Activated naive CD4-positive, alpha-beta T cell treated with anti-CD3 and anti-CD28 coated beads for 36 hours (primary cell): ENCODE measurements at regions of chr12 and their contacts with region 1.

Region 1: DNA sequence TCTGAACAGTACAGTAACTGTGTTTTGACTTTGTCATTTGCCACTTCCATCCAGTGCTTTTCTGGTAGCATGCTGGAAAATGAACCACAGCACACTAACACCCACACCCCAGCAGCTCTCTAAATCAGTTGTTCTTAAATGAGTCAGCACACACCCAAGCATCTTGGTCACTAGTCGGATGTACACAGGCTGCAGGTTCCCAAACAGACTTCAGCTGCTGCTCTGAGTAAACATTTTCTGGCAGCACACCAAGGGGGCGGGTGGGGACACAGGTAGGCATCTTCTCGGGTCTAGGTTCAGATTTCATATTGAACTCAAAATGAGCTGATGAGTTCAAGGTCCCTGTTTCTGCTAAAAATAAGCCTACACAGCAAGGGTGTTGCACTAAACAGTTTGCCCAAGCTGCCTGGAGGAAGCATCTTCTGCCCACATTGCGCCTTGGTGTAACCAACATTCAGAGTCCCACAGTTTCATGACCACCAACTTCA is 39.8 kb downstream of the IFNG start:
- DNase-seq: peak; percentile 83
- H3K4me3 Mint-ChIP-seq: no peak overlapping the region
- H3K27ac Mint-ChIP-seq: peak overlapping the region; percentile 43
- H3K4me1 Mint-ChIP-seq: peaks cover 33% of the 10 kb centered on the region
- H3K27me3 Mint-ChIP-seq: no peaks in the 10 kb centered on the region

Region 2: GRCh38 chr12:67991158-67991557 is 128.6 kb before region 1 on chr12:
- CTCF ChIA-PET with region 1: no interaction called
- intact Hi-C with region 1: loop called (anchors 1 kb)
- DNase-seq: peak; percentile 74
- H3K4me3 Mint-ChIP-seq: peak overlapping the region; percentile 55
- H3K27ac Mint-ChIP-seq: peak overlapping the region; percentile 80
- H3K4me1 Mint-ChIP-seq: peaks cover 49% of the 10 kb centered on the region
- H3K27me3 Mint-ChIP-seq: peaks cover 2% of the 10 kb centered on the region

Region 3: DNA sequence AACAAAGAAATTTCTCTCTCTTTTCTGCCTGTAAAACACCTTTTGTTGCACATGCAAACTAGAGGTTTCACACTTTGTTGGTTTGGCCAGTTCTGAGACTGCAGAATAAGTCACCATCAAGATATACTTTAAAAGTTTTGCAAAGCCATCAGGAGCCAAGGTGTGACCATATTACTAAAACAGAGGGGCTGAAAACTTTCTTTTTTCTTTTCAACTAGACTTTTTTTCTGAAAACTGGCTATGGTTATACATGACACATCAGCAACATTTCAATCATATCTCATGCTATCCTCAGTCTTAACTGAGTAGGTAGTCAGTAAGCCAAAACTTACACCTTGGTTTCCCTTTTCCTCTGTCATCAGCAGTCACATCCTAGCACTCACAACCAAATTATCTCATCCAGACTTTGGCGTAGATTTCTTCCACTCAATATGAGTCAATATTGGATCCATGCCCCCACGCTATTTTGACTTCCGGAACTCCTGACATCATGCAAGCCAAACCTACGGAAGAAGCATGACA is 43.9 kb after region 1 on chr12:
- CTCF ChIA-PET with region 1: interaction called, 88 read pairs
- intact Hi-C with region 1: loop called (anchors 1 kb)
- DNase-seq: peak; percentile 27
- H3K4me3 Mint-ChIP-seq: no peak overlapping the region
- H3K27ac Mint-ChIP-seq: peak overlapping the region; percentile 64
- H3K4me1 Mint-ChIP-seq: peaks cover 19% of the 10 kb centered on the region
- H3K27me3 Mint-ChIP-seq: no peaks in the 10 kb centered on the region

Region 4: DNA sequence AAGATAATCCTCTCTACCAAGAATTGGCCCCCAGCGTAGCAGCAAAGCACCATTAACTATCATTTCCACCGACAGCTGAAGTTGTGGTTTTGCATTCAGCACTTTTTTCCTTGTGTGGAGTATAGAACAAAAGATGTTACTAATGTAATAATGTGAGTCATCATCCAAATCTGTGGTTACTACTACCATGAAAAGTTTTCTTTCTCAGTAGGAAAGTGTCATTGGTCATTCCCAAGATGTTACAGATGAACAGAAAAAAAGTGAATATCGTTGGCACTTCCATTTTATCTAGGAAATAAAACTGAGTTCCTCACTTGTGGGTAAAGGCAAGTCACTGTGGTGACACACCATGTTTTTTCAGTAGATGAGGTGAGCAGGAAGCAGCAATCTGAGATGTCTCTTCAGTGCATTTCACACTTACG is 70.1 kb after region 1 on chr12:
- CTCF ChIA-PET with region 1: no interaction called
- intact Hi-C with region 1: loop called (anchors 1 kb)
- DNase-seq: peak; percentile 65
- H3K4me3 Mint-ChIP-seq: peak overlapping the region; percentile 9
- H3K27ac Mint-ChIP-seq: peak overlapping the region; percentile 61
- H3K4me1 Mint-ChIP-seq: peaks cover 26% of the 10 kb centered on the region
- H3K27me3 Mint-ChIP-seq: no peaks in the 10 kb centered on the region

Region 5: GRCh38 chr12:68406134-68406594 is 286.4 kb after region 1 on chr12:
- CTCF ChIA-PET with region 1: no interaction called
- intact Hi-C with region 1: no loop called
- DNase-seq: no peak
- H3K4me3 Mint-ChIP-seq: no peak overlapping the region
- H3K27ac Mint-ChIP-seq: no peak overlapping the region
- H3K4me1 Mint-ChIP-seq: peaks cover 4% of the 10 kb centered on the region
- H3K27me3 Mint-ChIP-seq: no peaks in the 10 kb centered on the region

Region 6: DNA sequence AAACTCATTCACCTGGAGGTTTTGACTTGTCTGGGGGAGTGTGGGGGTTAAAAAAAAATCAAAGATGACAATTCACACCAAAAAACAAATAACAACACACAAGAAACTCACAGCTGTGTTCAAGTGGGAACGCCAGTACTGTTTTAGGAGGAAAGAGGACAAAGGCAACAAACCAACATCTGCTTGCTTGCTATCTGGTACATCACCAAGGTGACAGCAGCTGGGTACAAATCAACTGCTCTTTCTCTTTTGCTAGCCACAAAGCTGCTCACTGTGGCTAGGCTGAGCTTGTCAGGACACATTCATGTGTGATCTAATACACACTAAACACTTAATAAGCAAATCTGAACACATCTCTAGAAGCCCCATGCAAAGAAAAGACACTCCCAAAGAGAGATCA is 362.9 kb after region 1 on chr12:
- CTCF ChIA-PET with region 1: no interaction called
- intact Hi-C with region 1: loop called (anchors 1 kb)
- DNase-seq: peak; percentile 28
- H3K4me3 Mint-ChIP-seq: no peak overlapping the region
- H3K27ac Mint-ChIP-seq: peak overlapping the region; percentile 42
- H3K4me1 Mint-ChIP-seq: peaks cover 37% of the 10 kb centered on the region
- H3K27me3 Mint-ChIP-seq: no peaks in the 10 kb centered on the region